Activated CD8-positive, alpha-beta T cell treated with anti-CD3 and anti-CD28 coated beads for 36 hours (primary cell): ENCODE measurements at regions of chr9 and their contacts with region 1.

Region 1: DNA sequence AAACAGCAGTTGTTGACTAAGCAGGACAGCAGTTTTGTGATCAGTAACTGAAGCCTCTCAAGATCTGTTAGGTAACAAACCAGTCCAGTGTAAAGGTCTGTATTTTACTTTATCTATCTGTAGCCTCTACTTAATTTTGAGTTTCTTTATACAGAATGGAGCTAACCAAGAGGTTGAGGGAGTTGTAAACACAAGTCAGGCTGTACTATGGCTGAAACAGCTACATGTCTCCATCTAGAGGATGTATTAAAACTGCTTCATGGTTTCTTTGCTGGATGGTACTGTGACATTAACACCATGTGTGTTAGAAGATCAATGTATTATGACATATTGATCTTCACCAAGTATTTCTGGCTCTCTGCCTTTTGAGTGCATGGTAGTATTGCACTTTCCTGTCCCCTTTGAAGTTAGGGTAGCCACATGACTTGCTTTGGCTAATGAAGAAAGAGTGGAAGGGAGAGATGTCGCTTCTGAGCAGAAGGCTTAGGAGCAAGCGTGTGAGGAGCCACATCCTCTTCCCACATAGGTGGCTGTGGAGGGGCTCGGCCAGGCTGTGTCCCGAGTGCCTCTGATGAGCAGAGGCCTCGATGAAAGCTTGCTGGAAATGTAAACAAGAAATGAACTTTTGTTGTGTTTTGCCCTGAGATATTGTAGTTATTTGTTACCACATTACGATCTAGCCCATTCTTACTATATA is 105.6 kb upstream of the PCA3 start:
- DNase-seq: no peak
- ATAC-seq: peak; percentile 88
- H3K4me3 Mint-ChIP-seq: no peak overlapping the region
- H3K27ac Mint-ChIP-seq: no peak overlapping the region
- H3K4me1 Mint-ChIP-seq: peaks cover 29% of the 10 kb centered on the region
- H3K27me3 Mint-ChIP-seq: peaks cover 5% of the 10 kb centered on the region
- CTCF ChIP-seq: peak; percentile 70

Region 2: DNA sequence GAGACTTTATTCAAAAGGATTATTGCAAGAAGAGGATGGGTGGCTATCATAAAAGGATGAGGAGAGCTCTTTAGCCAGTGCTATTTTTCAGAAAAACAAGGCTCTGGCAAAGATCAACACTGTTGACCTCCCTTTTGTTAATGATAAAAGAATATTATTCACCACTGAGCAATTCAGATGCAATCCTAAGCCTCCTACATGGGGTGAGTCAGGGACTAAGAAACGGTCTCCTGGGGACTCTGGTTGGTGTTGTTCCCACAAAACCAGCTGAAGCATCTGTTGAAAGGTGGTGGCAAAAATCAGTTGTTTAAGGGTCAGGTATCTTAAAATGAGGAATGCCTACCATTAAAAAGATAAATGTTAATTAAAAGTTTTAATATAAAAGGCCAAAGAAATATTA is 207.4 kb before region 1 on chr9:
- CTCF ChIA-PET with region 1: interaction called, 19 read pairs
- POLR2A ChIA-PET with region 1: no interaction called
- intact Hi-C with region 1: loop called (anchors 1 kb)
- DNase-seq: no peak
- ATAC-seq: no peak
- H3K4me3 Mint-ChIP-seq: no peak overlapping the region
- H3K27ac Mint-ChIP-seq: no peak overlapping the region
- H3K4me1 Mint-ChIP-seq: peaks cover 5% of the 10 kb centered on the region
- H3K27me3 Mint-ChIP-seq: no peaks in the 10 kb centered on the region
- CTCF ChIP-seq: no peak

Region 3: GRCh38 chr9:76576344-76576743 is 82.3 kb before region 1 on chr9:
- CTCF ChIA-PET with region 1: interaction called, 3 read pairs
- POLR2A ChIA-PET with region 1: no interaction called
- intact Hi-C with region 1: loop called (anchors 10 kb)
- DNase-seq: peak; percentile 96
- ATAC-seq: peak; percentile 92
- H3K4me3 Mint-ChIP-seq: peak overlapping the region; percentile 38
- H3K27ac Mint-ChIP-seq: peak overlapping the region; percentile 94
- H3K4me1 Mint-ChIP-seq: peaks cover 37% of the 10 kb centered on the region
- H3K27me3 Mint-ChIP-seq: peaks cover 37% of the 10 kb centered on the region
- CTCF ChIP-seq: no peak

Region 4: DNA sequence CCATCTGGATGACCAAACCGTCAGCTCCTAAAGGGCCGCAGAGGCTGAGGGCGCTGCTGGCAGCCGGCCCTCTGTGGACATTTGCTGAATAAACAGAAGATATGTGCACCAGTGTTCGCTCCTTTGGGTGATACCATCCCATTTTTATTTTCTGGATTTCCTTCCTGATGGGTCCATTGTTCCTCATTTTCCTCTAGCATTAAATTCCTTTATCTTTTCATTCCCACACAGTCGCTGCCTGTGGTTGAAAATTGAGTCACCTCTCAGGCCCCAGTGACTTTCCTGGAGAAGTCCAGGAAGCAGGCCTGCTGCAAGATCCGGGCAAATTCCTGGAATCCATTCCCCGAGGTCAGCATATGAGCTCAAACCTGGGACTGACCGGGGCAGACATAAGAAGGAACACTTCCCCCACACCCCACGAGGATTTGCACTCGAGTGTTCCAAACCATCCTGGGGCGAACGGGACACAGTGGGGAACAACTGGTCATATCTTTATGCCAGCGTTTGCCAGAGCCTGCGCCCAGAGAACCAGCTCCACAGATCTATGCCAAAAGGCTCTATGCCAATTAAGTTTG is 18.9 kb after region 1 on chr9:
- CTCF ChIA-PET with region 1: no interaction called
- POLR2A ChIA-PET with region 1: no interaction called
- intact Hi-C with region 1: no loop called
- DNase-seq: no peak
- ATAC-seq: no peak
- H3K4me3 Mint-ChIP-seq: no peak overlapping the region
- H3K27ac Mint-ChIP-seq: no peak overlapping the region
- H3K4me1 Mint-ChIP-seq: peaks cover 8% of the 10 kb centered on the region
- H3K27me3 Mint-ChIP-seq: no peaks in the 10 kb centered on the region
- CTCF ChIP-seq: no peak

Region 5: GRCh38 chr9:76704593-76705204 is 46.0 kb after region 1 on chr9:
- CTCF ChIA-PET with region 1: interaction called, 4 read pairs
- POLR2A ChIA-PET with region 1: no interaction called
- intact Hi-C with region 1: loop called (anchors 5 kb)
- DNase-seq: no peak
- ATAC-seq: no peak
- H3K4me3 Mint-ChIP-seq: no peak overlapping the region
- H3K27ac Mint-ChIP-seq: no peak overlapping the region
- H3K4me1 Mint-ChIP-seq: no peaks in the 10 kb centered on the region
- H3K27me3 Mint-ChIP-seq: peaks cover 21% of the 10 kb centered on the region
- CTCF ChIP-seq: peak; percentile 83

Region 6: GRCh38 chr9:76732341-76732958 is 73.8 kb after region 1 on chr9:
- CTCF ChIA-PET with region 1: no interaction called
- POLR2A ChIA-PET with region 1: no interaction called
- intact Hi-C with region 1: no loop called
- DNase-seq: no peak
- ATAC-seq: no peak
- H3K4me3 Mint-ChIP-seq: no peak overlapping the region
- H3K27ac Mint-ChIP-seq: no peak overlapping the region
- H3K4me1 Mint-ChIP-seq: no peaks in the 10 kb centered on the region
- H3K27me3 Mint-ChIP-seq: peaks cover 5% of the 10 kb centered on the region
- CTCF ChIP-seq: no peak